A673 (cell line): ENCODE measurements at regions of chr4 and their contacts with region 1.

Region 1: GRCh38 chr4:22090661-22091351 is 142.2 kb upstream of the KCNIP4 start:
- DNase-seq: no peak
- H3K4me3 ChIP-seq: no peak overlapping the region
- H3K27ac ChIP-seq: no peak overlapping the region
- H3K4me1 ChIP-seq: no peaks in the 10 kb centered on the region
- H3K27me3 ChIP-seq: no peaks in the 10 kb centered on the region
- CTCF ChIP-seq: no peak

Region 2: GRCh38 chr4:21964762-21965319 is 126.0 kb before region 1 on chr4:
- CTCF ChIA-PET with region 1: no interaction called
- POLR2A ChIA-PET with region 1: no interaction called
- intact Hi-C with region 1: no loop called
- DNase-seq: no peak
- H3K4me3 ChIP-seq: no peak overlapping the region
- H3K27ac ChIP-seq: no peak overlapping the region
- H3K4me1 ChIP-seq: no peaks in the 10 kb centered on the region
- H3K27me3 ChIP-seq: no peaks in the 10 kb centered on the region
- CTCF ChIP-seq: no peak

Region 3: DNA sequence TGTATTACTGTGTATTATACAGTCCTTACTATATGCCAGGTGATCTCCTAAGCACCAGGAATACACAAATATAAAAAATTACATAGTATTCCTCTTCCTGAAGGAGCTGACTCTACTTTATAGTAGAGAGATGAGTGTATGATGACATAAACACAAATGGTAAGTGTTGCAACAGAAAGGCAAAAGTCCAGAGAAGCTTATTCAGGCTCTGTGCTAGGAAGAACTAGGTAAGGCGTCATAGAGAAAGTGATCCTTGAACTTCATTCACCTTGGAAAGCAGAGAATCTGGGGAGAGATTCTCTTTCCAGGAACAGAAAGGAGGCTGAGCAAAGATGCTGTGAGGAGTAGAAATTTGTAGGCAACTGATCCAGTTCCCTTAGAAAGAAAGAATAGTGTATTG is 27.2 kb before region 1 on chr4:
- CTCF ChIA-PET with region 1: no interaction called
- POLR2A ChIA-PET with region 1: no interaction called
- intact Hi-C with region 1: loop called (anchors 1 kb)
- DNase-seq: no peak
- H3K4me3 ChIP-seq: no peak overlapping the region
- H3K27ac ChIP-seq: no peak overlapping the region
- H3K4me1 ChIP-seq: no peaks in the 10 kb centered on the region
- H3K27me3 ChIP-seq: no peaks in the 10 kb centered on the region
- CTCF ChIP-seq: no peak

Region 4: GRCh38 chr4:22190855-22191254 is 100.0 kb after region 1 on chr4:
- CTCF ChIA-PET with region 1: no interaction called
- POLR2A ChIA-PET with region 1: no interaction called
- intact Hi-C with region 1: no loop called
- DNase-seq: peak; percentile 4
- H3K4me3 ChIP-seq: no peak overlapping the region
- H3K27ac ChIP-seq: no peak overlapping the region
- H3K4me1 ChIP-seq: no peaks in the 10 kb centered on the region
- H3K27me3 ChIP-seq: no peaks in the 10 kb centered on the region
- CTCF ChIP-seq: no peak